Thyroid gland (tissue), 4 donors: ENCODE measurements at regions of chr15 and their contacts with region 1.

Region 1: DNA sequence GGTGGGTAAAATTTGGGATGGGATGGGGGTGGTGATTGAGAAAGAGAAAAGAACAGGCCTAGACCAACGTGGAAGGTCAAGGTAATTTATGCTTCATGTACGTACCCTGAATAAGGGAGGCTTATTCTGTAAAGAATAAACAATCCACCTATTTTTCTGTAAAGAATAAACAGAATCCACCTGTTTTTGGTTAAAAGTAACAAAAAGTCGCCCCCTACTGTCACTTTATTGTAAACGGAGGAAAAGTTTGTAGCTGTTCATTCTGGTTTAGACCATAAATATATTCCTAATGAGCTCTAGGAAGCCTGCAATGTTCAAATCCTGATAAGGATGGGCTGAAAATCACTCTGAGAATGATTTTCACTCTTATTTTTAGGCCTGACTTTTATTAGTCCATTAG is 23.5 kb upstream of the SQOR start:
- DNase-seq: no peak
- H3K4me3 ChIP-seq: no peak overlapping the region
- H3K27ac ChIP-seq: peak overlapping the region; percentile 43 to 80 (median 59)
- H3K4me1 ChIP-seq: peaks cover 22 to 24% of the 10 kb centered on the region in 2 donors
- H3K27me3 ChIP-seq: no peaks in the 10 kb centered on the region
- CTCF ChIP-seq: peak in 5 of 6 experiments; percentile 22 to 68 (median 42)
- POLR2A ChIP-seq: no peak

Region 2: GRCh38 chr15:45457641-45458433 is 153.5 kb before region 1 on chr15:
- intact Hi-C with region 1: loop called (anchors 5 kb)
- DNase-seq: peak; percentile 65 to 71
- H3K4me3 ChIP-seq: peak overlapping the region in 2 of 3 donors; percentile 15 to 32
- H3K27ac ChIP-seq: peak overlapping the region; percentile 68 to 92 (median 83)
- H3K4me1 ChIP-seq: no peaks in the 10 kb centered on the region
- H3K27me3 ChIP-seq: no peaks in the 10 kb centered on the region
- CTCF ChIP-seq: peak; percentile 48 to 93 (median 72)
- POLR2A ChIP-seq: no peak

Region 3: GRCh38 chr15:45522328-45523160 is 88.8 kb before region 1 on chr15 and contains the start of gene SLC30A4:
- intact Hi-C with region 1: loop called (anchors 5 kb)
- DNase-seq: peak; percentile 82 to 85
- H3K4me3 ChIP-seq: peak within 1 kb of the TSS; percentile 56 to 88 (median 68)
- H3K27ac ChIP-seq: peak within 1 kb of the TSS; percentile 86 to 91 (median 86)
- H3K4me1 ChIP-seq: peaks cover 16 to 22% of the 10 kb centered on the region in 2 donors
- H3K27me3 ChIP-seq: no peaks in the 10 kb centered on the region
- CTCF ChIP-seq: peak in 3 of 6 experiments; percentile 18 to 51 (median 44)
- POLR2A ChIP-seq: peak; percentile 28 to 92
- total RNA-seq, gene SLC30A4: 12.5 to 15.9 (median 13.6) TPM